Naive thymus-derived CD4-positive, alpha-beta T cell (primary cell): ENCODE measurements at regions of chr11 and their contacts with region 1.

Region 1: GRCh38 chr11:114172871-114173444 is 113.4 kb downstream of the ZBTB16 start:
- DNase-seq: peak in 6 of 9 donors; percentile 54 to 77 (median 63)
- ATAC-seq: peak; percentile 84
- H3K4me3 ChIP-seq: peak overlapping the region; percentile 14
- H3K4me3 Mint-ChIP-seq: peak overlapping the region; percentile 34 to 78 (median 71)
- H3K27ac ChIP-seq: peak overlapping the region; percentile 40
- H3K27ac Mint-ChIP-seq: peak overlapping the region; percentile 76 to 98 (median 96)
- H3K4me1 ChIP-seq: peaks cover 59 to 82% of the 10 kb centered on the region in 2 donors
- H3K4me1 Mint-ChIP-seq: peaks cover 65 to 98% (median 90%) of the 10 kb centered on the region in 7 donors
- H3K27me3 ChIP-seq: no peaks in the 10 kb centered on the region
- H3K27me3 Mint-ChIP-seq: peaks cover 0 to 4% (median 0%) of the 10 kb centered on the region in 5 donors

Region 2: DNA sequence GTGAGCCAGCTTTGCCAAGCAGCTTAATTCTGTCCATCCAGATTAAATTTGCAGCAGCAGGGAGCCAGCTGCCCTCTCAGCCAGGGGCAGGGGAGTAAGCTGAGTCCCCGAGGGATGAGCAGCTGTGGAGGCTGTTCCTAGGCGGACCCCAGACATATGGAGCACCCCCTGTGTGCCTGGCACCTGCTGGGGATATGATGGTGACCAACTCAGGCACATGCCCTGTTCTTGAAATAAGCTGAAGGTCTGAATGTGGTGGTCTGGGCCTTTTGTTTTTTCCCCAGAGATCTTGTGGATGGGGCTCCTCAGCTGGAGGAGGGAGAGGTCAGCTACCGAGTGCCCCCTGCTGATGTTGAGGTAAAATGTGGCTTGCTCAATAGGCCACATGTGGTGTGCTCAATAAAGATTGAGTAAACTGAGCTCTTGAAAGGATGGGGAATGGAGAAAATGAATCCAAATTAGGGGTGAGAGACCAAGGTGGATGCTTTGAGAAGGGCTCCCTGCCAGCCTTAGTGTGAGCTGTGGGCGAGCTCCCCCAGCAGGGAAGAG is 20.0 kb after region 1 on chr11:
- CTCF ChIA-PET with region 1: interaction called, 11 read pairs
- POLR2A ChIA-PET with region 1: interaction called, 363 read pairs
- intact Hi-C with region 1: loop called in 1 of 2 experiments (anchors 2 kb)
- DNase-seq: no peak
- ATAC-seq: no peak
- H3K4me3 ChIP-seq: no peak overlapping the region
- H3K4me3 Mint-ChIP-seq: no peak overlapping the region
- H3K27ac ChIP-seq: no peak overlapping the region
- H3K27ac Mint-ChIP-seq: peak overlapping the region in 5 of 9 donors; percentile 16 to 54 (median 39)
- H3K4me1 ChIP-seq: peaks cover 3 to 8% of the 10 kb centered on the region in 2 donors
- H3K4me1 Mint-ChIP-seq: peaks cover 11 to 57% (median 37%) of the 10 kb centered on the region in 7 donors
- H3K27me3 ChIP-seq: no peaks in the 10 kb centered on the region
- H3K27me3 Mint-ChIP-seq: peaks cover 0 to 3% (median 0%) of the 10 kb centered on the region in 5 donors

Region 3: GRCh38 chr11:114366331-114367243 is 193.6 kb after region 1 on chr11:
- CTCF ChIA-PET with region 1: no interaction called
- POLR2A ChIA-PET with region 1: no interaction called
- intact Hi-C with region 1: no loop called
- DNase-seq: no peak
- ATAC-seq: no peak
- H3K4me3 ChIP-seq: no peak overlapping the region
- H3K4me3 Mint-ChIP-seq: no peak overlapping the region
- H3K27ac ChIP-seq: no peak overlapping the region
- H3K27ac Mint-ChIP-seq: no peak overlapping the region
- H3K4me1 ChIP-seq: no peaks in the 10 kb centered on the region
- H3K4me1 Mint-ChIP-seq: peaks cover 0 to 1% (median 0%) of the 10 kb centered on the region in 7 donors
- H3K27me3 ChIP-seq: no peaks in the 10 kb centered on the region
- H3K27me3 Mint-ChIP-seq: peaks cover 3 to 27% (median 14%) of the 10 kb centered on the region in 5 donors